T-cell (primary cell): ENCODE measurements at regions of chr2 and their contacts with region 1.

Region 1: GRCh38 chr2:199488772-199489400 is 31.1 kb upstream of the SATB2 start:
- DNase-seq: peak in 21 of 35 experiments; percentile 9 to 64 (median 28)
- ATAC-seq: no peak
- H3K4me3 ChIP-seq: no peak overlapping the region
- H3K4me3 Mint-ChIP-seq: no peak overlapping the region
- H3K27ac ChIP-seq: no peak overlapping the region
- H3K27ac Mint-ChIP-seq: no peak overlapping the region
- H3K4me1 ChIP-seq: no peaks in the 10 kb centered on the region
- H3K4me1 Mint-ChIP-seq: peaks cover 0 to 2% (median 0%) of the 10 kb centered on the region in 3 donors
- H3K27me3 ChIP-seq: peaks cover 0 to 6% of the 10 kb centered on the region in 2 experiments
- H3K27me3 Mint-ChIP-seq: peaks cover 28 to 40% of the 10 kb centered on the region in 2 donors

Region 2: DNA sequence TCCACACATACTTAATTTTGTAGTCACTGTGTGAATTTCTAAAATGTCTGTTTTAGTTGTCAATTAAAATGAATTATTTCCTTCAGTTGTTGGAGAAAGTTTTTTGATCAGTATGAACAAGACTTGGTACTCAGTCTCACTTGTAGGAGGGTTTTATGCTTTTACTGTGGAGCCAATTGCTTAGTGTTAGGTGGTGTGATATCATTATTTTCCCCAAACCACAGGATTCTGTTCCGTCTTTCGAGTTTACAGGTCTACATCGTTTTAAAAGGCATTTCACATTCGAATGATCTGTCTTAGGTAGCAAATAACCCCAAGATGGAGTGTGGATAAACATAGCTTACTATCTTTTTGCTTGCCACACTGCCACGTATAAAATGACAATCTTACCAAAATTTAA is 834.2 kb before region 1 on chr2:
- CTCF ChIA-PET with region 1: interaction called in 1 of 2 experiments, 11 read pairs
- POLR2A ChIA-PET with region 1: no interaction called
- DNase-seq: no peak
- ATAC-seq: no peak
- H3K4me3 ChIP-seq: no peak overlapping the region
- H3K4me3 Mint-ChIP-seq: no peak overlapping the region
- H3K27ac ChIP-seq: no peak overlapping the region
- H3K27ac Mint-ChIP-seq: no peak overlapping the region
- H3K4me1 ChIP-seq: no peaks in the 10 kb centered on the region
- H3K4me1 Mint-ChIP-seq: no peaks in the 10 kb centered on the region
- H3K27me3 ChIP-seq: no peaks in the 10 kb centered on the region
- H3K27me3 Mint-ChIP-seq: peaks cover 0 to 4% of the 10 kb centered on the region in 2 donors

Region 3: DNA sequence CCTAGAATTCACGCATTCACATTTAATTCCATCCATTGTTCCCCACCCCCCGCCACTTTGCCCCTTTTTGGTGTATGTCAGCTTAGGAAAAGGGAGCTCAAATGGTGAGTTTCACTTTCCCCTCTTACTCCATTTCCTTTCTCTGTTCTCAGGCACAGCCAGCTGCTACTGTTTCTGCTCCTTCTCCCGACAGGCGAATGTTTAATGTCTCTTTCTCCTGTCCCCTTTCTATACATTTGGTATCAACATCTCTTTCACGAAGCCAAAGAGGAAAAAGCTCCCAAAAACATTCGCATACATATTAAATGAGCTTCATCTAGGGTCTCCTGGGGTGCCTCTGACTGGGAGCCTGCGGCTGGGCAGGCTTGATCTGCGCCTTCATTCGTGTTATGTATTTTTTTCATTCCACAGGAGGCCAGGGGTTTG is 93.1 kb after region 1 on chr2:
- CTCF ChIA-PET with region 1: no interaction called
- POLR2A ChIA-PET with region 1: no interaction called
- DNase-seq: no peak
- ATAC-seq: no peak
- H3K4me3 ChIP-seq: no peak overlapping the region
- H3K4me3 Mint-ChIP-seq: no peak overlapping the region
- H3K27ac ChIP-seq: no peak overlapping the region
- H3K27ac Mint-ChIP-seq: no peak overlapping the region
- H3K4me1 ChIP-seq: no peaks in the 10 kb centered on the region
- H3K4me1 Mint-ChIP-seq: peaks cover 0 to 3% (median 0%) of the 10 kb centered on the region in 3 donors
- H3K27me3 ChIP-seq: no peaks in the 10 kb centered on the region
- H3K27me3 Mint-ChIP-seq: peaks cover 7 to 9% of the 10 kb centered on the region in 2 donors

Region 4: DNA sequence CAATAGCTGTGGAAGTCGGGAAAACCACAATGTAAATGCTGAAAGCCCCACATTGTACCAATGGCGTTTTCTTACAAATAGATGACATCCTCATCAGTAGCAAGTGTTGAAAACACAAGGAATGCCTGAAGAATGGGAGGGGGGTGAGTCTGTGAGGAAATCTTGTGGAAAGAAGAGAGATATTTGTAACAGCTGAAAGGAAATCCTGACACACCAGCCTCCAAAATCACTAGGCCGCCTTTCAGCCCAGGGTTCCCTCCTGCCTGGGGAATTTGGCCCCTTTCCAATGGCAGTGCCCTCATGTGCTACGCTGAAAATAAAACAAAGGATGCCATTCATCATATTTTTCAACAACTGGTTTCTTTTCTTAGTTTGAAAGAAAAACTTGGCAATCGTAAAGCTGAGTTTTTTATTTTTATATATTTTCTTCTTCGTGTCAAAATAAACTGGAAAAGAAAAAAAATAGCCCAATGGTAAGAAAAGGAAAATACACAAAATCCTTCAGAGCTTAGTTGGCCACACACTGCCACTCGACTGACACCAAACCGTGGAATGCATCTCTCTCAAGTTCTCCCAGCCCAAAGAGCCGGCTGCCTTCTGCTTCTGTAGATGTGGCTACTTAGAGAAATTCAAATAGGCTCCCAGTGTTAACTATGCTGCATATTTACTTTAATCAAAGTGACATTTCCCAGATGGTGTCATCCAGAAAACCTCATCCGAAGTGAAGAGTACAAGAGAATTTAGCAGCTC is 310.1 kb after region 1 on chr2:
- CTCF ChIA-PET with region 1: interaction called in 1 of 2 experiments, 12 read pairs
- POLR2A ChIA-PET with region 1: no interaction called
- DNase-seq: no peak
- ATAC-seq: no peak
- H3K4me3 ChIP-seq: no peak overlapping the region
- H3K4me3 Mint-ChIP-seq: no peak overlapping the region
- H3K27ac ChIP-seq: no peak overlapping the region
- H3K27ac Mint-ChIP-seq: no peak overlapping the region
- H3K4me1 ChIP-seq: no peaks in the 10 kb centered on the region
- H3K4me1 Mint-ChIP-seq: no peaks in the 10 kb centered on the region
- H3K27me3 ChIP-seq: no peaks in the 10 kb centered on the region
- H3K27me3 Mint-ChIP-seq: peaks cover 0 to 8% of the 10 kb centered on the region in 2 donors